WTC11 (cell line): ENCODE measurements at regions of chr6 and their contacts with region 1.

Region 1: DNA sequence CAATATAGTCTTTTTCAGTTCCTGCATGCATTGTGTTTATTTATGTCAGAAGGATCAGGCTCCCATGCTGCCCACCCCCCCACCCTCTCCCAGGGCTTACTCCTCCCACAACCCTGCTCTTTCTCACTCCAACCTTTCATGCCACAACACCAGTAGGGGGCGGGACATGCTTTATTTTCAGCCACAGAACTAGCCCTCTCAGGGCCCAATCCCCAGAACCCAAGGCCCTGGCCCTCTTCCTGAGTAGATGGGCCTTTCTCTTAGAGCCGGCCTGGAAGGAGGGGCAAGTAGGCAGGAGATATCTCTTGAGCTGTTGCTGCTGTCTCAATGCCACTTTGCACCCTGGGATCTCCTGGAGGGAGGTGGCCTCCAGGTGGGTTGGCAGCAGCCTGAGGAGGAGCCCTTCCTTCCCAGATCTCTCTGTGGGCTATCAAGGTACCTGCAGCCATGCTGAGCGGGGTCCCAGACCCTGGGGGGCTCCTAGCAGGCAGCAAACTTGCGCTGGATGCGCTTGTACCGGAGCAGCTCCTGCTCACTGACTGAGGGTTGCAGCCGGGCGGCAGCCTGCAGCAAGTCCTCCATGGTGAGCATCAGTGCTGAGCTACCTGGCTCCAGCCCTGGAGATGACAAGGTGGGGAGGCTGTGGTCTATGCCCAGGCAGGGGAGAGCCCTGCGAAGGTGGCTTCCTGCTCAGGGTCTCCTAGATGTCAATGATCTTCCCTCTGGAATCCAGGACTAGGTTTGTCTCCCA is 3.5 kb downstream of the GNMT start:
- DNase-seq: peak; percentile 87
- ATAC-seq: peak; percentile 78
- H3K4me3 Mint-ChIP-seq: no peak overlapping the region
- H3K27ac Mint-ChIP-seq: no peak overlapping the region
- H3K4me1 Mint-ChIP-seq: peaks cover 11% of the 10 kb centered on the region; the same call in 1 of the 2 replicates
- H3K27me3 Mint-ChIP-seq: peaks cover 29% of the 10 kb centered on the region
- CTCF ChIP-seq: no peak

Region 2: GRCh38 chr6:42911171-42912021 is 52.6 kb before region 1 on chr6:
- CTCF ChIA-PET with region 1: interaction called, 13 read pairs
- POLR2A ChIA-PET with region 1: interaction called, 6 read pairs
- DNase-seq: peak; percentile 85
- ATAC-seq: peak; percentile 81
- H3K4me3 Mint-ChIP-seq: peak overlapping the region; percentile 87
- H3K27ac Mint-ChIP-seq: peak overlapping the region; percentile 98
- H3K4me1 Mint-ChIP-seq: peaks cover 5% of the 10 kb centered on the region
- H3K27me3 Mint-ChIP-seq: no peaks in the 10 kb centered on the region; the same call in 1 of the 2 replicates
- CTCF ChIP-seq: no peak

Region 3: GRCh38 chr6:42928986-42929820 is 34.8 kb before region 1 on chr6 and contains the start of gene CNPY3:
- CTCF ChIA-PET with region 1: interaction called, 14 read pairs
- POLR2A ChIA-PET with region 1: interaction called, 5 read pairs
- DNase-seq: peak; percentile 96
- ATAC-seq: peak; percentile 88
- H3K4me3 Mint-ChIP-seq: peak within 1 kb of the TSS; percentile 99
- H3K27ac Mint-ChIP-seq: peak within 1 kb of the TSS; percentile 100
- H3K4me1 Mint-ChIP-seq: peaks cover 39% of the 10 kb centered on the region
- H3K27me3 Mint-ChIP-seq: no peaks in the 10 kb centered on the region
- CTCF ChIP-seq: no peak
- total RNA-seq, gene CNPY3: 67.0 to 88.7 TPM (median 86.5 TPM) in 3 replicates

Region 4: GRCh38 chr6:42978839-42979522 is 15.0 kb after region 1 on chr6 and contains the start of gene PEX6:
- CTCF ChIA-PET with region 1: interaction called, 19 read pairs
- POLR2A ChIA-PET with region 1: interaction called, 8 read pairs
- DNase-seq: peak; percentile 86
- ATAC-seq: peak; percentile 88
- H3K4me3 Mint-ChIP-seq: peak within 1 kb of the TSS; percentile 91
- H3K27ac Mint-ChIP-seq: peak within 1 kb of the TSS; percentile 98
- H3K4me1 Mint-ChIP-seq: peaks cover 21% of the 10 kb centered on the region
- H3K27me3 Mint-ChIP-seq: no peaks in the 10 kb centered on the region
- CTCF ChIP-seq: no peak
- total RNA-seq, gene PEX6: 8.2 to 12.6 TPM (median 11.7 TPM) in 3 replicates

Region 5: GRCh38 chr6:42984001-42984923 is 20.2 kb after region 1 on chr6 and contains the start of gene PPP2R5D:
- CTCF ChIA-PET with region 1: interaction called, 19 read pairs
- POLR2A ChIA-PET with region 1: interaction called, 8 read pairs
- DNase-seq: peak; percentile 98
- ATAC-seq: peak; percentile 97
- H3K4me3 Mint-ChIP-seq: peak within 1 kb of the TSS; percentile 79
- H3K27ac Mint-ChIP-seq: peak within 1 kb of the TSS; percentile 80
- H3K4me1 Mint-ChIP-seq: peaks cover 27% of the 10 kb centered on the region
- H3K27me3 Mint-ChIP-seq: no peaks in the 10 kb centered on the region
- CTCF ChIP-seq: no peak
- total RNA-seq, gene PPP2R5D: 47.5 to 52.7 TPM (median 49.0 TPM) in 3 replicates

Region 6: DNA sequence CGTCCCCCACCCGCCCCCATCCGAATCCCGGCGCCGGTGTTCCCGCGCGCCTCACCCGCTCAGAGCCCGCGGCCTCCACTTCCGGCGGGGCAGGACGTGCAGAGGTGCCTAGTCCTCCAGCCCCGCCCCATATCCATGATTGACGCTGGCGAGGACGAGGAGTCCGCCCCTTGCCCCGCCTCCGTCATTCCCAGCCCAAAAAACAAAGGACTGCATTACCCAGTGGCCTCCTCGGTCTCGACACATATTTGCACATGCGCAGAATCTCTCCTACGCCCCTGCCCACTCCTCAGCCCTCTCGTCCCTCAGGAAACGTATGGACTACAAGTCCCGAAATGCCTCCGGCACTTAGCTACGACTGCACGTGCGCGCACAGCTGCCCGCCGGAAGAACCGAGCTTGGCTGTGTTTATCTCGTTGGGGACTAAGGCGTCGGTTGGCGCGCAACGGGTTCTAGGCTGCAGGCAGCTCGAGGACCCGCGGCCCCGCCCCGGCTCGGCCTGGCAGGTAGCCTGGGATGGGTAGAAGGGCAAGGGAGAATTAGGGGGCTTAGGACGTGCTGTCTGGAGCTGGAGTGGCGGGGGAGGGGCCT is 49.9 kb after region 1 on chr6 and contains the starts of genes KLHDC3 and MEA1:
- CTCF ChIA-PET with region 1: interaction called, 17 read pairs
- POLR2A ChIA-PET with region 1: interaction called, 4 read pairs
- DNase-seq: peak; percentile 99
- ATAC-seq: peak; percentile 93
- H3K4me3 Mint-ChIP-seq: peak within 1 kb of the TSS; percentile 99
- H3K27ac Mint-ChIP-seq: peak within 1 kb of the TSS; percentile 95
- H3K4me1 Mint-ChIP-seq: peaks cover 28% of the 10 kb centered on the region
- H3K27me3 Mint-ChIP-seq: no peaks in the 10 kb centered on the region
- CTCF ChIP-seq: no peak
- total RNA-seq, gene KLHDC3: 157 to 172 TPM (median 169 TPM) in 3 replicates
- total RNA-seq, gene MEA1: 85.0 to 91.2 TPM (median 86.5 TPM) in 3 replicates